Mammary epithelial cell (primary cell): ENCODE measurements at regions of chr18 and their contacts with region 1.

Region 1: DNA sequence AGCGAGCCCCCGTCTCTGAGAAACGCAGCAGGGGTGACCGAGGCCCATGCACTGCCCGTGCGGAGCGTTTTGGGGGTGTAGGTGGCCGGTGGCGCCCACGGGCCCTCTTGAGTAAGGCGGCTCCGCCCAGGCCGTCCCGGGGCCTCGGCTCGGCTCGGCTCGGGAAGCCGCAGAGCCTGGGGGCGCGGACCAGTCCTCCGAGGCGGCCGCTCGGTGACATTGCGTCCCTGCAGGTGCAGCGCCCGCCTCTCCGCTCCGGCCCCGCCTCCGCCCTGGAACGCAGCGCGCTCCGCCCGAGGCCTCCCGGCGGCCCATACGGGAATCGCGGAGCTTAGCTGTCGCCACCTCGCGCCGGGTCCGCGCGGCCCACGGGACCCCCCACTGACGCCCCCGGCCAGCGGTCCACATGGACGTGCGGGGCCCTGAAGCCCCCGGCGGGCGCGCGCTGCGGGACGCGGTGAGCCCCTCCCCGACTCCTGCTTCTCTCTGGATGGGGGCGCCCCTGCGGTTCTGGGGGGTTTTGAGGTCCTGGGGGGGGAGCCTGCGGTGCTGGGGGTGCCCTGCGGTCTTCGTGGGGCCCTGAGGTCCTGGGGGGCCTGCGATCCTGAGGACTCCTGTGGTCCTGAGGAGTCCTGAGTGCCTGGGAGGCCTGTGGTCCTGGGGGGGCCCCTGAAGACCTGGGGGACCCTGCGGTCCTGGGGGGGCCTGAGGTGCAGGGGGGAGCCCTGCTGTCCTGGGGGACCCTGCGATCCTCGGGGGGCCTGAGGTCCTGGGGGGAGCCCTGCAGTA is at the start of gene HSBP1L1:
- DNase-seq: peak; percentile 48
- H3K4me3 ChIP-seq: peak within 1 kb of the TSS; percentile 65 to 82 (median 72)
- H3K27ac ChIP-seq: peak within 1 kb of the TSS; percentile 71
- H3K4me1 ChIP-seq: peaks cover 54% of the 10 kb centered on the region
- H3K27me3 ChIP-seq: no peaks in the 10 kb centered on the region
- CTCF ChIP-seq: peak in 1 of 2 donors; percentile 38
- total RNA-seq, gene HSBP1L1: 14.2 to 33.8 TPM

Region 2: GRCh38 chr18:79378542-79379250 is 585.8 kb before region 1 on chr18:
- CTCF ChIA-PET with region 1: interaction called, 3 read pairs
- dilution Hi-C with region 1: no loop called
- in situ Hi-C with region 1: no loop called
- intact Hi-C with region 1: loop called (anchors 5 kb)
- DNase-seq: peak; percentile 71
- H3K4me3 ChIP-seq: no peak overlapping the region
- H3K27ac ChIP-seq: no peak overlapping the region
- H3K4me1 ChIP-seq: no peaks in the 10 kb centered on the region
- H3K27me3 ChIP-seq: no peaks in the 10 kb centered on the region
- CTCF ChIP-seq: peak; percentile 80 to 97

Region 3: GRCh38 chr18:79657342-79657985 is 307.1 kb before region 1 on chr18:
- CTCF ChIA-PET with region 1: no interaction called
- dilution Hi-C with region 1: no loop called
- in situ Hi-C with region 1: no loop called
- intact Hi-C with region 1: loop called (anchors 2 kb)
- DNase-seq: peak; percentile 19
- H3K4me3 ChIP-seq: no peak overlapping the region
- H3K27ac ChIP-seq: no peak overlapping the region
- H3K4me1 ChIP-seq: no peaks in the 10 kb centered on the region
- H3K27me3 ChIP-seq: peaks cover 3% of the 10 kb centered on the region
- CTCF ChIP-seq: no peak

Region 4: DNA sequence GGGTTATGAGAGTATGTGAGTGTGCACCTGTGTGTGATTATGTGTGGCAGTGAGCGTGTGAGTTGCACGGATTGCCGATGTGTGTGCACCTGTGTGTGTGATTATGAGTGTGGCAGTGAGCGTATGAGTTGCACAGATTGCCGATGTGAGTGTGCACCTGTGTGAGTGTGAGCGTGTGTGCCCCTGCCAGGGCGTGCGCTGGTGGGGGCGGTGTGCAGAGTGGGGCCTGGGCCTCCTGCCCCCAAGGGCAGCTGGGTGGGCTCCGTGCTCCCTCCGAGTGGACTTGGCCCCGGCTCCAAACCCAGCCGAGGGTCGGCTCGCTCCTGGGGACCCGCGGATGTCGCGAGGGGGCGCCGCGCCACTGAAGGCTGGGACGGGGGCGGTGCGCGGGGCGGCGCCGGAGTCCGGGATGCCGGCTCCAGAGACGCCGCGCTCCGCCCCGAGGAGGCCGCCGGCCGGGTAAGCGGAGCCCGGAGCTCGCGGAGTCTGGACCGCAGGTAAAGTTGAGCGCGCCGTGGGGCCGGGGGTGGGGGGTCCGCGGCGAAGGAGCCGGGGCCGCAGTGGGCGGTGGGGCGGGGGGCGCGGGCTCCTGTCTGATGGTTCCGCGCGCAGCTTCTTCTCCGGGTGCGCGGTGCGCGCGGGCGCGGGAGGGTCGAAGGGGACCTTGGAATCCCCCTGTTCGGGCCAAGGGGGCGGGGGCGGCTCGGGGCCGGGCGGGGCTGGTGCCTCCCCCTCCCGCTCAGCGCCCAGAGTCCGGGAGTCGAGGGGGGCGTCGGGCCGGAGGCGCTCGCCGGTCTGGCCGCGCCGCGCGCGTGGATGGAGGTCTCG is 166.8 kb before region 1 on chr18 and contains the start of gene KCNG2:
- CTCF ChIA-PET with region 1: no interaction called
- dilution Hi-C with region 1: no loop called
- in situ Hi-C with region 1: no loop called
- intact Hi-C with region 1: loop called (anchors 1 kb)
- DNase-seq: no peak
- H3K4me3 ChIP-seq: no peak within 1 kb of the TSS
- H3K27ac ChIP-seq: no peak within 1 kb of the TSS
- H3K4me1 ChIP-seq: peaks cover 12% of the 10 kb centered on the region
- H3K27me3 ChIP-seq: peaks cover 20% of the 10 kb centered on the region
- CTCF ChIP-seq: no peak
- total RNA-seq, gene KCNG2: 0.17 TPM in 1 of 2 donors, not detected in the other

Region 5: DNA sequence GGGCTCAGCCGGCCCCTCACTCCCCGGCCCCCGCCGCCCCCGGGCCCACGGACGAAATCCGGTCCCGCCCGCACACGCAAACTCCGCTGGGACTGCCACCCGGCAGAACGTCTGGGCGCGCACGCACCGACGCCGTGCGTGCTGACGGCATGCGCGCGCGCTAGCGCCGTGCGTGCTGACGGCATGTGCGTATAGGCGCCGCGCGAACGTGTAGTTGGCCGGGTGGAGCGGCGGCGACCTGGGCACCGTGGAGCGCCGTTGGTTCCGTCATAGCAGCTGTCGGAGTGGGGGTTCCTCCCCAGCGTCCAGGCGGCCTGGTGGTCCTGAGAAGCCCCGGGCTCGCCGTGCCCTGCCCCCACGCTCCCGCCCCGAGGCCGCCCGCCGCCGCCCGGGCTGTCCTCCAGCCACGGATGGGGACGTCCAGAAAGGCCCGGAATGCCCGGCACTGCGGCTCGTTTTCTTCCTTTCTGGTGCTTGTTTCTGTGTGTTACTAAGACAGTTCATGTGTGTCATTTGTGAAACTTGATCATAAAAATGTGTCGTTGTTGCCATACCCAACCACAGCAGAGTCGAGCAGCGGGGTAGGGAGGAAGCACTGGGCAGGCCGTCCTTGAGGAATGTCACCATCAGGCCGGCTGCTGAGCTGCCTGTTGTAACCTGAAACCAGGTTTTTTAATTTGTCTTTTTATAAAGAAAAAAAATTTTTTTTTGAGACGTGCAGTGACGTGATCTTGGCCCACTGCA is 24.1 kb after region 1 on chr18 and contains the start of gene TXNL4A:
- CTCF ChIA-PET with region 1: no interaction called
- dilution Hi-C with region 1: no loop called
- in situ Hi-C with region 1: no loop called
- intact Hi-C with region 1: loop called (anchors 2 kb)
- DNase-seq: peak; percentile 81
- H3K4me3 ChIP-seq: peak within 1 kb of the TSS; percentile 74 to 99 (median 98)
- H3K27ac ChIP-seq: peak within 1 kb of the TSS; percentile 71
- H3K4me1 ChIP-seq: peaks cover 10% of the 10 kb centered on the region
- H3K27me3 ChIP-seq: no peaks in the 10 kb centered on the region
- CTCF ChIP-seq: no peak
- total RNA-seq, gene TXNL4A: 32.8 to 100 TPM